ENCODE measurements at regions of chr17 and their contacts with region 1.

Region 1: DNA sequence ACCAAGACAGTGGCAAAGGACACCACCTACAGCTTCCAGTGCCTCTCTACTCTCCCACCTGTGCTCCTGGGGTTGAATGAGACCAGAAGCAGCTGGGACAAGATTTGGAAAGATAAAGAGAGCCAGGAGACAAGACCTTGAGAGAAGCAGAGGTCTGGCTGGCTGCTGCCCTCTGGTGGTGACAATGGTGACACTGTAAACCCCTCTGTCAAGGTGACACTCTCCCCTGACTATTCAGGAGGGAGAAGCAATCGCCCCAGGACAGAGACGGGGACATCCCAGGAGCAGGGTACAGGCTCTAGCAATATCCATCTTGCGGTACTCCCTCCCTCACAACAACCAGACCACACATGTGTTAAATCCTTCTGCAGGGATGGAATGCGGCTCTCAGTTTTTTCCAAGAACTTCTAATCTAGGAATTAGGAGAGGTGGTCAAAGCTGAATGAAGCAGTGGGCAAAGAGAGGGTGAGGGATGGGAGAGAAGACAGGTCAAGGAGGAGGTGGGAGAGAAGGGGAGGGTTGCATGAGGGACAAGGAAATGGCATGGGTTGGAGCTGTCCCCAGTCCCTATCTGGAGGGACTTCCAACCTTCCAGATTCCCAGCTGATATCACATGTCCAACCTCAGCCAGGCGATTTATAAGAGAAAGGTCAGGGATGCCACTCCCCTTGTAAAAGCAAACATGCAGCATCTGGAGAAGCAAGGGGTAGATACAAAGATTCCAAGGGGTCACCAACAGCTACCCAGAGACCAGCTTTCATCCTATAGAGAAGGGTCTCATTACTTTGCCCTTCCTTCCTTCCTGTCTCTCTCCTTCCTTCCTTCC is 2.9 kb downstream of the PHOSPHO1 start:
- DNase-seq: peak; percentile 83
- H3K4me3 ChIP-seq: no peak overlapping the region
- H3K27ac ChIP-seq: no peak overlapping the region
- H3K4me1 ChIP-seq: peaks cover 9% of the 10 kb centered on the region
- H3K27me3 ChIP-seq: peaks cover 28% of the 10 kb centered on the region
- CTCF ChIP-seq: peak; percentile 62

Region 2: GRCh38 chr17:49053171-49053829 is 174.3 kb before region 1 on chr17:
- intact Hi-C with region 1: no loop called
- DNase-seq: no peak
- H3K4me3 ChIP-seq: no peak overlapping the region
- H3K27ac ChIP-seq: no peak overlapping the region
- H3K4me1 ChIP-seq: no peaks in the 10 kb centered on the region
- H3K27me3 ChIP-seq: no peaks in the 10 kb centered on the region
- CTCF ChIP-seq: no peak

Region 3: GRCh38 chr17:49180303-49180702 is 47.3 kb before region 1 on chr17:
- intact Hi-C with region 1: loop called (anchors 5 kb)
- DNase-seq: peak; percentile 77
- H3K4me3 ChIP-seq: no peak overlapping the region
- H3K27ac ChIP-seq: no peak overlapping the region
- H3K4me1 ChIP-seq: no peaks in the 10 kb centered on the region
- H3K27me3 ChIP-seq: no peaks in the 10 kb centered on the region
- CTCF ChIP-seq: peak; percentile 81

Region 4: DNA sequence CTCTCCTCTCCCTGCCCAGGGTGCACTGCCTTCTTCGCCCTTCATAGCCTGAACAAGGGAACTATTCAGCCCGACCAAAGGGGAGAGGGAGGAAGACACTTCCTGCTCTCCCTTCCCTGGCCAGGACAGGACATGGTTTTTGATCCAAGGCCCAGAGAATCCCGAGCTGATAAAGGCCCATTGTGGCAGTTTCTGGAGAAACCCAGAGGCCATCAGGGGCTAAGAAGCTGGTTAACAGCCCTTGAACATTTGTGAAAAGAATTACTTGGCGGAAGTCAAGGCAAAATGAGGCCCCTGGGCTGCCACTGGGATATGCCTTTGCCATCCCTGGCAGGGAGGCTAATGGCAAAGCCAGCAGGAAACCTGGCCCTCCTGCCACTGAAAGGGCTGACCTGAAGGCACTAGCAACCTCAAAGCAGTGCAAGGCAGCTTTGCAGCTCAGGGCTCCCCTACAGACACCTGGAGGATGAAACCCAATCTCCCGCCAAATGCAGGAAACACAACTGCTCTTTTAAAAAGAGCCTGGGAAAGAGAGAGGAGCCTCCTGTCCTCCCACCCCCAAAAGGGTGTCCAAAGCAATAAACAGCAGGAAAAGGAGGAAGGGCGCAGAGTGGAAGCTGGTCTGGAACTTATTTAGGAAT is 174.4 kb after region 1 on chr17:
- intact Hi-C with region 1: no loop called
- DNase-seq: no peak
- H3K4me3 ChIP-seq: no peak overlapping the region
- H3K27ac ChIP-seq: no peak overlapping the region
- H3K4me1 ChIP-seq: no peaks in the 10 kb centered on the region
- H3K27me3 ChIP-seq: no peaks in the 10 kb centered on the region
- CTCF ChIP-seq: no peak